Posterior cingulate gyrus (tissue), 11 donors: ENCODE measurements at regions of chr10 and their contacts with region 1.

Region 1: GRCh38 chr10:92573798-92574547 is at the start of gene IDE:
- DNase-seq: peak; percentile 76 to 98 (median 84)

Region 2: GRCh38 chr10:91797874-91798648 is 775.9 kb before region 1 on chr10 and contains the start of gene TNKS2:
- intact Hi-C with region 1: loop called (anchors 10 kb)
- DNase-seq: peak; percentile 85 to 98 (median 89)

Region 3: GRCh38 chr10:92517034-92517655 is 56.8 kb before region 1 on chr10:
- intact Hi-C with region 1: loop called (anchors 1 kb)
- DNase-seq: peak in 5 of 10 donors; percentile 19 to 76 (median 59)

Region 4: DNA sequence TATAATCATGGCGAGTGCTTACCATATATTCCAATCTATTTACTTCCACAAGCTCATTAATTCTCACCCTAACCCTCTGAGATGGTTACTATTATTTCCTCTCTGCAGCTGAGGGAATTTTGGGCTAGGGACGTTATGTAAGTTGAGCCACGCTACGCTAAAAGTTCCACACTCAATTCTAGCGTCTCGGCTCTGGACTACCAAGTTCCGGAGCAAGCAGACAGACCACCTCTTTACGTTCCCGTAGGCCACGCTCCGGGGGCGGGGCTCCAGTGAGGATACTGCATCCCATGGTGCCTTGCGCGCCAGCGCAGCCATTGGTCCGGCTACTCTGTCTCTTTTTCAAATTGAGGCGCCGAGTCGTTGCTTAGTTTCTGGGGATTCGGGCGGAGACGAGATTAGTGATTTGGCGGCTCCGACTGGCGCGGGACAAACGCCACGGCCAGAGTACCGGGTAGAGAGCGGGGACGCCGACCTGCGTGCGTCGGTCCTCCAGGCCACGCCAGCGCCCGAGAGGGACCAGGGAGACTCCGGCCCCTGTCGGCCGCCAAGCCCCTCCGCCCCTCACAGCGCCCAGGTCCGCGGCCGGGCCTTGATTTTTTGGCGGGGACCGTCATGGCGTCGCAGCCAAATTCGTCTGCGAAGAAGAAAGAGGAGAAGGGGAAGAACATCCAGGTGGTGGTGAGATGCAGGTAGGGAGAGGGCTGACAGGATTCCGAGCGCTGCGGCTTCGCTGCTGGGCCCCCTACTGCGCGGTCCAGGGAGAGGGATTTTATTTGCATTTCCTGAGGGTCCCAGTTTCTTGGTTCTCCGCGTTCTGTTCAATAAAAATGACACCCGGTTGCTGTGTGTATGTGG is 19.0 kb after region 1 on chr10 and contains the start of gene KIF11:
- intact Hi-C with region 1: loop called (anchors 1 kb)
- DNase-seq: peak; percentile 95 to 100 (median 98)

Region 5: DNA sequence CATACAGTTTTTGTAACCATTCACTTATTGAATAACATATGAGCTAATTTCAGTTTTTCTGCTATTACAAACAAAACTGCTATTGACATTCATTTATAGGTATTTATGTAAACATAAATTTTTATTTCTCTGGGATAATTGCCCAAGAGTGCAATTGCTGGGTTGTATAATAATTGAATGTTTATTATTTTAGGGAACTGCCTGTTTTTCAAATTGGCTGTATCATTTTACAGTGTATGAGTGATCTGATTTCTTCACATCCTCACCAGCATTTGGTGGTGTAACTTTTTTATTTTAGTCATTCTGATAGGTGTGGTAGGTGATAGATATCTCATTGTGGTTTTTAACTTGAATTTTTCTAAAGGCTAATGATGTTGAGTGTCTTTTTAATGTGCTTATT is 45.4 kb after region 1 on chr10:
- intact Hi-C with region 1: no loop called
- DNase-seq: no peak